MCF 10A (cell line): ENCODE measurements at regions of chr2 and their contacts with region 1.

Region 1: GRCh38 chr2:62787386-62787785 is 81.9 kb downstream of the EHBP1 start:
- DNase-seq: peak; percentile 55
- H3K4me3 Mint-ChIP-seq: no peak overlapping the region
- H3K27ac Mint-ChIP-seq: no peak overlapping the region
- H3K4me1 Mint-ChIP-seq: peaks cover 39% of the 10 kb centered on the region
- H3K27me3 Mint-ChIP-seq: no peaks in the 10 kb centered on the region
- CTCF ChIP-seq: peak; percentile 45

Region 2: DNA sequence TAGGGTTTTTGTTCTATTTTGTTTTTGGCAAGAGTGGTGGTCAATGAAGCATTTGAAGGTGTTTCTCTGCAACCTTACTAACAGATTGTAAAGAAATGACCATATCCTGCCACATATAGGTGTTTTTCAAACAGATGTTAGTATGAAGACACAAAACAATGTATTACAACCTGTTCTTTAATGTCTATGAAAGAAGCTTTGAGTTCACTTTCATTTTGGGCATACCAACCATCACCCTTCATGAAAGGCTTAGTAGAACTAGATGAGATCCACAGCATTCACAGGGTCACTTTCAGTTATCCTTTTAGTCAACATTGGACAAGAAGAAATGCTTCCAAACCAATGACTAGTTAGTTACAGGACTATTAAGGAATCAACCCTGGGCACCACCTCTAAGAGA is 13.2 kb after region 1 on chr2:
- CTCF ChIA-PET with region 1: interaction called, 29 read pairs
- POLR2A ChIA-PET with region 1: interaction called, 4 read pairs
- intact Hi-C with region 1: no loop called
- DNase-seq: no peak
- H3K4me3 Mint-ChIP-seq: no peak overlapping the region
- H3K27ac Mint-ChIP-seq: no peak overlapping the region
- H3K4me1 Mint-ChIP-seq: peaks cover 1% of the 10 kb centered on the region
- H3K27me3 Mint-ChIP-seq: no peaks in the 10 kb centered on the region
- CTCF ChIP-seq: no peak

Region 3: GRCh38 chr2:63023444-63023843 is 236.1 kb after region 1 on chr2:
- CTCF ChIA-PET with region 1: interaction called, 3 read pairs
- POLR2A ChIA-PET with region 1: no interaction called
- intact Hi-C with region 1: loop called (anchors 1 kb)
- DNase-seq: peak; percentile 67
- H3K4me3 Mint-ChIP-seq: no peak overlapping the region
- H3K27ac Mint-ChIP-seq: peak overlapping the region; percentile 52
- H3K4me1 Mint-ChIP-seq: peaks cover 5% of the 10 kb centered on the region
- H3K27me3 Mint-ChIP-seq: no peaks in the 10 kb centered on the region
- CTCF ChIP-seq: peak; percentile 35

Region 4: GRCh38 chr2:63189026-63189425 is 401.6 kb after region 1 on chr2:
- CTCF ChIA-PET with region 1: interaction called, 26 read pairs
- POLR2A ChIA-PET with region 1: no interaction called
- intact Hi-C with region 1: loop called (anchors 1 kb)
- DNase-seq: peak; percentile 77
- H3K4me3 Mint-ChIP-seq: peak overlapping the region; percentile 31
- H3K27ac Mint-ChIP-seq: no peak overlapping the region
- H3K4me1 Mint-ChIP-seq: peaks cover 6% of the 10 kb centered on the region
- H3K27me3 Mint-ChIP-seq: no peaks in the 10 kb centered on the region
- CTCF ChIP-seq: peak; percentile 90

Region 5: DNA sequence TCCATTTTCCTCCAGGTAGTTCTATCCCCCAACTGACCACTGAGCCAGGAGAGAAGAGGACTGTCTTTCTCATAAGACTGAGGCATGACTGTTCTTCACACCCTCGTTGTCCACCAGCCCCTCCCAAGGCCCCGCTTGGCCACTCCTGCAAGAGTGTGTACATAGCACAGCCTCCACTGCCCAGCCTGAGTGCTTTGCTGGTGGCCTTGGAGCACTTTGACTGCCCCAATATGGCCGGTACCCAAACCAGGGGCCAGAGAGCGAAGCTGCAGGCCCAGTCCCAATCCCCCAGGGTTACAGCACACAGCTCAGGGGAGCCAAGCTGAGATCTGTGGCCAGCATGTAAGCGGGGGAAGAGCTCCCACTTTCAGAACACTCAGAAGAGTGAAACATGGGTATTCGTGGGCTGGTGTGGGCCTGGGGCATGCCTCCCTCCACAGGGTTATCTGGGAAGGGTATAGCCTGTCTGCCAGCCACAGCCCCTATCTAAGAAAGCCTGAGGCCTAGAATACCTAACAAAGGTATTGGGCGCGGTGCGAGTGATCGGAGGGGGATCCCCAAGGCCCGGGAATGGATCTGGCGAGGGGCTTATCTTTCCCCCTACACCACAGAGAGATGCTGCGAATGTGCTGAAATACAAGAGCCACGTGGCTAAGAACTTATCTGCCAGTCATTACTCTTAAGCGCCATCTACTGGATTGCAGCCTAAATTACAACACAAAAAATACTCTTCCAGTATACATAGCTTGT is 637.1 kb after region 1 on chr2:
- CTCF ChIA-PET with region 1: interaction called, 6 read pairs
- POLR2A ChIA-PET with region 1: no interaction called
- intact Hi-C with region 1: loop called (anchors 2 kb)
- DNase-seq: peak; percentile 68
- H3K4me3 Mint-ChIP-seq: no peak overlapping the region
- H3K27ac Mint-ChIP-seq: no peak overlapping the region
- H3K4me1 Mint-ChIP-seq: no peaks in the 10 kb centered on the region
- H3K27me3 Mint-ChIP-seq: no peaks in the 10 kb centered on the region
- CTCF ChIP-seq: peak; percentile 63

Region 6: DNA sequence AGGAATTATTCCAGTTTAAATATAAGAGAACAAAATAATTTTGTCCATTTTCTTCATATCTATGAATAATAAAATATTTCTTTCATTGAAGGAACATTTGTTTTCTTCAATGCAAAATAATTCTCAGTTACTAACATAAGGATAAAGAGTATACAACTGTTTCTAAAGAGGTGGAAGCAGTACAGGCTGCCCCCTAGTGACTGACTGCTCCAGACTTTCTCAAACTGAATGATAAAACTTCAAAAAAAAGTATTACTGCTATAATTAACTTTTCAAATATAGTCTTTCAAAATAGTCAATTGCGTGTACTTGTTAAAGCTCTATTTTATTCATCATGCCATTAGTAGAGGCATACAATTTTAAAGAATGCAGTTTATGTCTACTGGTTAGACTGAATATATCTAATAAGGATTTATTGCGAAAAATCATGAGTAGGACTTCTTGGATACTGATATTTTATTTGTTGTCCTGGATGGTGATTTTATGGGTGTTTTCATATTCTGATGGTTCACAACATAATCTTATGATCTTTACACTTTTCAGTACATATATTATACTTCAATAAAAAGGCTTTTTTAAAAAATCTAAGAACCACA is 700.8 kb after region 1 on chr2:
- CTCF ChIA-PET with region 1: interaction called, 31 read pairs
- POLR2A ChIA-PET with region 1: no interaction called
- intact Hi-C with region 1: loop called (anchors 1 kb)
- DNase-seq: peak; percentile 46
- H3K4me3 Mint-ChIP-seq: no peak overlapping the region
- H3K27ac Mint-ChIP-seq: no peak overlapping the region
- H3K4me1 Mint-ChIP-seq: no peaks in the 10 kb centered on the region
- H3K27me3 Mint-ChIP-seq: no peaks in the 10 kb centered on the region
- CTCF ChIP-seq: peak; percentile 54